ENCODE measurements at regions of chr15 and their contacts with region 1.

Region 1: GRCh38 chr15:82197733-82198594 is 64.6 kb downstream of the EFL1 start:
- DNase-seq: peak; percentile 79
- ATAC-seq: peak; percentile 99
- H3K4me3 ChIP-seq: no peak overlapping the region
- H3K27ac ChIP-seq: no peak overlapping the region
- H3K4me1 ChIP-seq: no peaks in the 10 kb centered on the region
- H3K27me3 ChIP-seq: no peaks in the 10 kb centered on the region
- CTCF ChIP-seq: peak; percentile 82
- POLR2A ChIP-seq: no peak; the same call in 1 of the 2 replicates
- RAD21 ChIP-seq: peak; percentile 91

Region 2: DNA sequence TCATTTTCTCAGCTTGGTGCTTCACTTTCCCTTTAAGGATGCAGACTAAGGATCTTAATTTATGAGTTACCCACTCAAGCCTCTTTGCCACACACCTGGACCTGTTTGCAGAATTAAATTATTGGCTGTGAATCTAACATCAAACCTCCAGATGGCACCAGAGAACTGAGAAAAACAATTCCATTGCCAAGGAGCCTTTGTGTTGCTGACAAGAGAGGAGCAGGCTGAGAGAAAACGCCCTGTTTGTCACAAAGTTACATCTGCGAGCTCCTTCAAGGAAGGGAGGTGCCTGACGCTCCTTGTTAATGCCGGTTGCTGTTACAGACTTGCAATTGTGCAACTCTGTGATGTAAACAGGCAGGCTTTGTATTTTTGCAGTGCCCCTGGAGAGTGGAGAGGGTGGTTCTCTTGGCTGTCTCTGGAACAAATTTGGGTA is 787.6 kb before region 1 on chr15:
- CTCF ChIA-PET with region 1: no interaction called
- POLR2A ChIA-PET with region 1: no interaction called
- dilution Hi-C with region 1: no loop called
- in situ Hi-C with region 1: loop called (anchors 10 kb)
- intact Hi-C with region 1: loop called (anchors 2 kb)
- DNase-seq: peak; percentile 74
- ATAC-seq: peak; percentile 80
- H3K4me3 ChIP-seq: no peak overlapping the region
- H3K27ac ChIP-seq: no peak overlapping the region
- H3K4me1 ChIP-seq: no peaks in the 10 kb centered on the region
- H3K27me3 ChIP-seq: peaks cover 14% of the 10 kb centered on the region
- CTCF ChIP-seq: peak; percentile 68
- POLR2A ChIP-seq: no peak
- RAD21 ChIP-seq: peak; percentile 81

Region 3: DNA sequence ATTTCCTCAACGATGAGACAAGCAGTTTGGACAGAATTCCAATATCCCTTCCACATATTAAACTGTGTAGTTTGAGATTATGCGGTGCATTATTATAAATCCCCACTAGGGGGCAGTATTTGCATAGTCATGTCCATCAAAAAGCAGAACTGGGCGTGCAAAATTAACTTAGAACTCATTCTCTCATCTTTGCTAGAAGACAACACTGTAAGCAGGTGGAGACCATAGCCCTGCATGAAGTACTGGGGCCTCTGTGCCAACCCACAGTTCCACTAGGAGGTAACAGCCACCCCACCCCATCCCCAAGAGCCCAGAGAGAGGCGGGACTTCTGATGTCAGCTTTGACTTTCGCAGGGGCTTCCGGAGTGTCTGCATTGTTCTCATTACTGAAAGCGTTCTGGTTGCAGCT is 717.3 kb before region 1 on chr15:
- CTCF ChIA-PET with region 1: no interaction called
- POLR2A ChIA-PET with region 1: no interaction called
- dilution Hi-C with region 1: no loop called
- in situ Hi-C with region 1: loop called (anchors 5 kb)
- intact Hi-C with region 1: loop called (anchors 2 kb)
- DNase-seq: peak; percentile 69
- ATAC-seq: peak; percentile 81
- H3K4me3 ChIP-seq: no peak overlapping the region
- H3K27ac ChIP-seq: no peak overlapping the region
- H3K4me1 ChIP-seq: no peaks in the 10 kb centered on the region
- H3K27me3 ChIP-seq: no peaks in the 10 kb centered on the region
- CTCF ChIP-seq: peak; percentile 83
- POLR2A ChIP-seq: 0 out of 2 replicates have a peak, but pooled peaks have one; percentile 29
- RAD21 ChIP-seq: peak; percentile 94

Region 4: GRCh38 chr15:81642451-81642990 is 555.4 kb before region 1 on chr15:
- CTCF ChIA-PET with region 1: no interaction called
- POLR2A ChIA-PET with region 1: no interaction called
- dilution Hi-C with region 1: no loop called
- in situ Hi-C with region 1: no loop called
- intact Hi-C with region 1: loop called (anchors 5 kb)
- DNase-seq: peak; percentile 97
- ATAC-seq: peak; percentile 95
- H3K4me3 ChIP-seq: no peak overlapping the region
- H3K27ac ChIP-seq: peak overlapping the region; percentile 93; the same call in 1 of the 2 replicates
- H3K4me1 ChIP-seq: peaks cover 11% of the 10 kb centered on the region
- H3K27me3 ChIP-seq: no peaks in the 10 kb centered on the region
- CTCF ChIP-seq: no peak
- POLR2A ChIP-seq: no peak
- RAD21 ChIP-seq: no peak

Region 5: DNA sequence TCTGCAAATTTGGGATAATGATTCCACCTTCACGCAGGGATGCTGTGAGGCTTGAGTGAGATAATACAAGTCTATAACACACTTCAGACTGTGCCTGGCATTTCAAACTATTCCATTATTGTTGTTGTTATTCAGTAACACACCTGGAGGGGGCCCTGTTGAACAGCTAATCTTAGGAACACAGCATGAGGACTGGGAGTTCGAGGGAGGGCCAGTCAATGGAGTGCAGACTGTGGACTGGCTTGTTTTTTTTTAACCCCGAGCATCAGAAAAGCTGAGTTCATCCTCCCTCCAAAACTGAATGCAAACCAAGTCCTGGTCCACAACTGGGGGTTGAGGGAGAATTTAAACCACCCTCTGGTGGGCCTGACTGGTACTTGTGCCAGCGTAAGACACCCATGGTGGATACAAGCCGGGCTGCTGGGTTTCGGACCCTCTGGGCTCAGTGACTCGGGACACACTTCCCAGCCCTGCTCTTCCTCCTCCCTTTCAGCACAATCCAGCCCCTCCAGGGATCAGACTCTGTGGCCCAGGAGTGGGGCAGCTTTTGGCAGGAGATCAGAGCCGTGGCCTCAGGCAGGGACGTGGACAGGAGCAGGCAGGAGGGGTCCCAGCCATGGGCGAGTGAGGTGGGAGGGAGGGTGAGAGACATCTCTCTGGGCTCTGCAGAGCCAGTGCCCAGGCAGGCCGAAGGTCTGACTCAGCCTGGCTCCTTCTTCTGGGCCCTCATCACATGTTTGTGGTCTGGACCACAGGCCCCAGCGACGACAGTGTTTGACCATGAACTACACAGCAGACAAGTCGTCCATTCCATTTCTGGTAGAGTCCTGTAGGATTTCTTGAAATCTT is 115.8 kb before region 1 on chr15:
- CTCF ChIA-PET with region 1: no interaction called
- POLR2A ChIA-PET with region 1: no interaction called
- dilution Hi-C with region 1: no loop called
- in situ Hi-C with region 1: no loop called
- intact Hi-C with region 1: loop called (anchors 1 kb)
- DNase-seq: peak; percentile 93
- ATAC-seq: peak; percentile 96
- H3K4me3 ChIP-seq: no peak overlapping the region
- H3K27ac ChIP-seq: peak overlapping the region; percentile 85
- H3K4me1 ChIP-seq: peaks cover 8% of the 10 kb centered on the region
- H3K27me3 ChIP-seq: no peaks in the 10 kb centered on the region
- CTCF ChIP-seq: peak; percentile 41
- POLR2A ChIP-seq: no peak
- RAD21 ChIP-seq: peak; percentile 47

Region 6: GRCh38 chr15:82108489-82109078 is 89.4 kb before region 1 on chr15:
- CTCF ChIA-PET with region 1: interaction called, 3 read pairs
- POLR2A ChIA-PET with region 1: no interaction called
- dilution Hi-C with region 1: no loop called
- in situ Hi-C with region 1: loop called (anchors 5 kb)
- intact Hi-C with region 1: loop called (anchors 1 kb)
- DNase-seq: peak; percentile 50
- ATAC-seq: peak; percentile 94
- H3K4me3 ChIP-seq: no peak overlapping the region
- H3K27ac ChIP-seq: no peak overlapping the region
- H3K4me1 ChIP-seq: peaks cover 4% of the 10 kb centered on the region; the same call in 1 of the 2 replicates
- H3K27me3 ChIP-seq: no peaks in the 10 kb centered on the region
- CTCF ChIP-seq: peak; percentile 89
- POLR2A ChIP-seq: peak; percentile 29; the same call in 1 of the 2 replicates
- RAD21 ChIP-seq: peak; percentile 94

Region 7: GRCh38 chr15:82315519-82316246 is 117.7 kb after region 1 on chr15:
- CTCF ChIA-PET with region 1: no interaction called
- POLR2A ChIA-PET with region 1: no interaction called
- dilution Hi-C with region 1: no loop called
- in situ Hi-C with region 1: no loop called
- intact Hi-C with region 1: no loop called
- DNase-seq: no peak
- ATAC-seq: no peak
- H3K4me3 ChIP-seq: no peak overlapping the region
- H3K27ac ChIP-seq: no peak overlapping the region
- H3K4me1 ChIP-seq: no peaks in the 10 kb centered on the region
- H3K27me3 ChIP-seq: peaks cover 8% of the 10 kb centered on the region; the same call in 1 of the 2 replicates
- CTCF ChIP-seq: no peak
- POLR2A ChIP-seq: no peak
- RAD21 ChIP-seq: no peak

Region 8: GRCh38 chr15:83248151-83249029 is 1050.4 kb after region 1 on chr15:
- CTCF ChIA-PET with region 1: no interaction called
- POLR2A ChIA-PET with region 1: no interaction called
- dilution Hi-C with region 1: no loop called
- in situ Hi-C with region 1: no loop called
- intact Hi-C with region 1: no loop called
- DNase-seq: peak; percentile 68
- ATAC-seq: peak; percentile 91
- H3K4me3 ChIP-seq: no peak overlapping the region
- H3K27ac ChIP-seq: no peak overlapping the region
- H3K4me1 ChIP-seq: no peaks in the 10 kb centered on the region
- H3K27me3 ChIP-seq: peaks cover 9% of the 10 kb centered on the region; the same call in 1 of the 2 replicates
- CTCF ChIP-seq: peak; percentile 95
- POLR2A ChIP-seq: 0 out of 2 replicates have a peak, but pooled peaks have one; percentile 30
- RAD21 ChIP-seq: peak; percentile 92